MCF 10A (cell line): ENCODE measurements at regions of chr20 and their contacts with region 1.

Region 1: DNA sequence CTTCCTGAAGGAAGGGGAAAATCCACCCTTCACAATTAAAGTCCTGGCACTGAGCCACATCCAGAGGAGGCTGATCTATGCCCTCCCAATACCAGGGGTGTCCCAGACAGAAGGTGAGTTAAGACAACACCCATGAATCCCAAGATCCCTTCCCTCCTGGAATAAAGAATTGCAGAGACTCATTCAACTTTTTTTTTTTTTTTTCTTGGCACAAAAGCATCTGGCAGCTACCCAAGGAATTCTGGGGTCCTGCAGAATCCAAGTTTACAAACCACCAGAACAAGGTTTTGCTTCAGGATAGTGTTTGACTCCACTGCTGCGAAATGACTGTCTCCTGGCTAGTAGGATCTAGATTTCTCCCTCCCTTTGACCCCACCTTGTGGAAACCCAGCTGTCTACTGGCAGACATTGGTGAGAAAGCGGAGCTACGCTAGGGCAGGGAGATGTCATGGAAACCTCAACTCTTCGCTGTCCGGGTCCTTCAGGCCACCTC is 37.4 kb downstream of the JAG1 start:
- DNase-seq: peak; percentile 90
- H3K4me3 Mint-ChIP-seq: peak overlapping the region; percentile 29
- H3K27ac Mint-ChIP-seq: peak overlapping the region; percentile 85
- H3K4me1 Mint-ChIP-seq: peaks cover 44% of the 10 kb centered on the region
- H3K27me3 Mint-ChIP-seq: no peaks in the 10 kb centered on the region
- CTCF ChIP-seq: no peak

Region 2: DNA sequence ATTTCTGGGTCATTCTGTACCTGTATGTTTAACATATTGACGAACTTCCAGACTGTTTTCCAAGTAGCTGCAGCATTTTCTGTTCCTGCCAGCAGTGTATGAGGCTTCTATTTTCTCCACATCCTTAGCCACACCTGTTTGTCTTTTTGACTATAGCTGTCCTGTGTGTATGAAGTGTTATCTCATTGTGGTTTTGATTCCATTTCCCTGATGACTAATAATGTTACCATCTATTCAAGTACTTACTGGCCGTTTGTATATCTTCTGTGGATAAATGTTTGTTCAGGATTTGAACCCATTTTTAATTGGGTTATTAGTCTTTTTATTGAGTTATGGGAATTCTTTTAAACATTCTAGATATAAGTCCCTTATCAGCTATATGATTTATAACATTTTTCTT is 57.8 kb before region 1 on chr20:
- CTCF ChIA-PET with region 1: interaction called, 12 read pairs
- POLR2A ChIA-PET with region 1: interaction called, 8 read pairs
- intact Hi-C with region 1: no loop called
- DNase-seq: peak; percentile 54
- H3K4me3 Mint-ChIP-seq: no peak overlapping the region
- H3K27ac Mint-ChIP-seq: peak overlapping the region; percentile 71
- H3K4me1 Mint-ChIP-seq: peaks cover 32% of the 10 kb centered on the region
- H3K27me3 Mint-ChIP-seq: no peaks in the 10 kb centered on the region
- CTCF ChIP-seq: no peak

Region 3: GRCh38 chr20:10603971-10604864 is 32.2 kb before region 1 on chr20:
- CTCF ChIA-PET with region 1: interaction called, 19 read pairs
- POLR2A ChIA-PET with region 1: interaction called, 36 read pairs
- intact Hi-C with region 1: no loop called
- DNase-seq: peak; percentile 94
- H3K4me3 Mint-ChIP-seq: peak overlapping the region; percentile 47
- H3K27ac Mint-ChIP-seq: peak overlapping the region; percentile 87
- H3K4me1 Mint-ChIP-seq: peaks cover 20% of the 10 kb centered on the region
- H3K27me3 Mint-ChIP-seq: no peaks in the 10 kb centered on the region
- CTCF ChIP-seq: no peak

Region 4: DNA sequence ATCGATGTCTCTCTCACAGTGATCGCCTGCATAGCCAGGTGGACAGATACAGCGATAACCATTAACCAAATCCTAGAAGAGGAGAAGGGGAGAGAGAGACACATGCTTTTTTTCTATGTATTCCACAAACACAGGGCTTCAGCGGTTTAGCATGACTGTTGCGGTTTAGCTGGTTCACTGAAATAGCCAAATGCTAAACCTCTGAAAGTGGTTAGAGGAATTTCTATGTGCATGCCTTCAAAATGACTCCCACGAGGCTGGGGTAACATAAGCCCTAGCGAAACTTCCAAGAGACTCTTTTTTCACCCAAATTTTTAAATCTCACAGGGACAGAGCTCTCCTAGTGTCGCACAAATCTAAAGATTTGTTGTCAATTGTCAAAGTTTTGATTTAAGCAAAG is 12.3 kb after region 1 on chr20:
- CTCF ChIA-PET with region 1: interaction called, 12 read pairs
- POLR2A ChIA-PET with region 1: interaction called, 11 read pairs
- intact Hi-C with region 1: no loop called
- DNase-seq: no peak
- H3K4me3 Mint-ChIP-seq: no peak overlapping the region
- H3K27ac Mint-ChIP-seq: peak overlapping the region; percentile 19
- H3K4me1 Mint-ChIP-seq: no peaks in the 10 kb centered on the region
- H3K27me3 Mint-ChIP-seq: no peaks in the 10 kb centered on the region
- CTCF ChIP-seq: no peak

Region 5: DNA sequence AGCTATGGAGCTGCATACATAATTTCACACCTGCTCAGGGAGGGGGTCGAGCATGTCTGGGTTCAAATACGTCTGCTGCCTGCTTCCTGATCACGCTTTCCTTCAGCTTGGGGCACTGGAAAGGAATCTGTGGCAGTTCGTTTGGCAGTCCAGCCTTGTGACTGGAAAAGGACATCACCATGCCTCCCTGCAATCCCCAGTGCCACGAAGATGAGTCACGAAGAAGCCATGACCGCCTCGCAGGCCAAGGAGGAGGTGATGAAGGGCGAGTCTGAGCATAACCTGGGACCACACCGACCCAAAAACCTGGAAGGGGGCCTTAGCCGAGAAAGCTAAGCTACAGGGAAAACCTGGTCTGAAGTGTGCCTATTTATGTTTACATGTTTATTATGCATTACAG is 24.3 kb after region 1 on chr20:
- CTCF ChIA-PET with region 1: interaction called, 12 read pairs
- POLR2A ChIA-PET with region 1: interaction called, 15 read pairs
- intact Hi-C with region 1: no loop called
- DNase-seq: peak; percentile 70
- H3K4me3 Mint-ChIP-seq: peak overlapping the region; percentile 3
- H3K27ac Mint-ChIP-seq: peak overlapping the region; percentile 56
- H3K4me1 Mint-ChIP-seq: peaks cover 30% of the 10 kb centered on the region
- H3K27me3 Mint-ChIP-seq: no peaks in the 10 kb centered on the region
- CTCF ChIP-seq: no peak